Activated CD4-positive, alpha-beta memory T cell treated with anti-CD3 and anti-CD28 coated beads for 36 hours (primary cell): ENCODE measurements at regions of chr18 and their contacts with region 1.

Region 1: DNA sequence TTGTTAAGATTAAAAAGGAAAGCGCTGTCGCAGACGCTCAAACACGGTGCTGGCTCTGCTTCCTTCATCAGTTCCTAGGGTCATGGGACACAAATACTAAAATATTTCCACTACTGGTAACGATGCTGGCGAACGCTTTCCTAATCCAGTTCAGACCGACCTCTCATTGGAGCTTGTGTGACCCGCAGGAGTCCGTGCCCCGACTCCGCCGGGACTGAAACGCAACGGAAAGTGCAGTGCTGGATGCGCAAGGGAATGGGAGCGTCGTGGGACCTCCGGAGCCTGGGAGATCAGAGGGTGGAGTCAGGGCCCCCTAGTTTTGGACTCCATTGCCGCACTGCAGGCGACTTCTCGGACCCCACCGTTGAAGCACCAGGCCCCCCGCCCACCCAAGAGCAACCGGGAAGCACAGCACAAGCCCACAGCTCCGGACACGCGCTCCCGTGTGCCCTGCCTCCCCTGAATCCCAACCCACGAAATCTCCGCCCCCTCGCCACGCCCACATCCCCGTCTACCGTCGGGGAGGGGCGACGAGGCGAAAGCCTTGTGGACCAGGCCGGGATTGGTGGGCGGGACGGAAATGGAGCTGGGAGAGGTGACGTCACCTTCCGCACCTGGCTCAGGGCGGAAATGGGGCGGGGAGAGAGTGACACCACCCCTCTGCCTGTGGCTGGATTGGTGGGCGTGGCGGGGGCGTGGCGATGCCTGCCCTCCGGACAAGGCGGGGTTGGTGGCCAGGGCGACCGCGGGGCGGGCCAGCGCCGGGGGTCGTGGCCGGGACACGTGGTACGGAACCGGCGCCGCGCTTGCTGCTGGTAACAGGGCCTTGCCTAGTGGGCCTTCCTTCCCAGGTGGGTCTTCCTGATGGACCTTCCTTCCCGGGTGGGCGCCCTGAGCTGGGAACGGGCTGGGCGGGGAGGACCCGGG is at the start of gene CNDP2:
- DNase-seq: peak; percentile 100
- H3K4me3 Mint-ChIP-seq: peak within 1 kb of the TSS; percentile 95
- H3K27ac Mint-ChIP-seq: peak within 1 kb of the TSS; percentile 100
- H3K4me1 Mint-ChIP-seq: peaks cover 38% of the 10 kb centered on the region
- H3K27me3 Mint-ChIP-seq: no peaks in the 10 kb centered on the region
- total RNA-seq, gene CNDP2: 144 to 147 TPM

Region 2: GRCh38 chr18:74147779-74148542 is 347.9 kb before region 1 on chr18 and contains the starts of genes FBXO15 and TIMM21:
- CTCF ChIA-PET with region 1: interaction called, 3 read pairs
- POLR2A ChIA-PET with region 1: no interaction called
- intact Hi-C with region 1: loop called (anchors 1 kb)
- DNase-seq: peak; percentile 97
- H3K4me3 Mint-ChIP-seq: peak within 1 kb of the TSS; percentile 95
- H3K27ac Mint-ChIP-seq: peak within 1 kb of the TSS; percentile 99
- H3K4me1 Mint-ChIP-seq: peaks cover 40% of the 10 kb centered on the region
- H3K27me3 Mint-ChIP-seq: peaks cover 2% of the 10 kb centered on the region
- total RNA-seq, gene FBXO15: 0.67 to 0.75 TPM
- total RNA-seq, gene TIMM21: 37.1 to 38.3 TPM

Region 3: DNA sequence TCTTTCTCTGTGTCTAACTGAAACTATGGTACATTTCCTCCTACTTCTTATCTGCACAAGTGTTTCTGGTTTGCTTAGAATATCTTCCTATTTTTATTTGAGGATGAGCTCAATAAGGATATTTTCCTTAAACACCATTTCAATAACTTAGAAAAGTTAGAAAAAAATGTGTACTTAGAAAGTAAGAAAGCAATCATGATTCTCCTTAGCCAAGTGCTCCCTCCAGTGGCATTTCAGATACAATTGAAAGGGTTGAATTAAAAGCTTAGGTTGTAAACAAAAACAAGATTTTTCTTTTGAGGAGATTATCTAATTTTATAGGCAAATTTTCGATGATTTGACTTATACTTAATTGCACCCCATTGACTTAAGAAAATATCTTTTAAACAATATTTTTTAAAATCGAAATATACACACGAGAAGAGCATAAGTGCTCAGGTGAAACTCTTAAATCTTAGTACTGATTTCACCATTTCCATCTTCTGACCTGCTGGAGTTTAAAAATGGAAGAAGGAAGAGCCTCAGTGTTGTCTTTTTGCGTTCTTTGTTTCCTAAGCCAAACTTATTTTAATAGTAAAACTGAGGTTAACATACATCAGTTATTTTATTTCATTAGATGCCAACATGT is 153.3 kb before region 1 on chr18:
- CTCF ChIA-PET with region 1: interaction called, 11 read pairs
- POLR2A ChIA-PET with region 1: no interaction called
- intact Hi-C with region 1: no loop called
- DNase-seq: no peak
- H3K4me3 Mint-ChIP-seq: no peak overlapping the region
- H3K27ac Mint-ChIP-seq: no peak overlapping the region
- H3K4me1 Mint-ChIP-seq: no peaks in the 10 kb centered on the region
- H3K27me3 Mint-ChIP-seq: peaks cover 6% of the 10 kb centered on the region

Region 4: DNA sequence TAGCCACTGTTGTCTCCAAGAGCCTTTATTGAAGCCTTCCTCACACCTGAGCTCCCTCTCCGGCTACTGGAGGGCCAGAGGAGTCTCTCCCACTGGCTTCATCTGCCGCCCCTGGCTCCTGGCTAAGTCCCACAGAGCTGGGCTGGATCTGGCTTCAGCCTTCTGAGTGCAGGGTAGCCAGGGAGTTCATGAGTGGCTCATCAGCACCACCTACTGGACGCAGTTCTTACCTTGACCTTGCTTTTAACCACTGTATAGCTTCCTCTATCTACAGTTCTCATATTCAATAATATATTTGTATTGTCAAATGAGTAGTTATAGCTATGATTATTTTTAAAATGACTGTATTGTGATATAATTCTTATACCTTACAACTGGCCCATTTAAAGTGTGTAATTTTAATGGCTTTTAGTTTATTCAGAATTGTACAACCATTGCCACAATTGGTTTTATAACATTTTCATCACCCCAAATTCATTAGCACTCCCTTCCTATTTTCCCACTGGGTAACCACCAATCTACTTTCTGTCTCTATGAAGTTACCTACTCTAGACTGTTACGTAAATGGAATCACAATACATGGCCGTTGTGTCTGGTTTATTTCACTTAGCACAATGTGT is 56.2 kb after region 1 on chr18:
- CTCF ChIA-PET with region 1: interaction called, 7 read pairs
- POLR2A ChIA-PET with region 1: no interaction called
- intact Hi-C with region 1: loop called (anchors 5 kb)
- DNase-seq: peak; percentile 86
- H3K4me3 Mint-ChIP-seq: no peak overlapping the region
- H3K27ac Mint-ChIP-seq: peak overlapping the region; percentile 51
- H3K4me1 Mint-ChIP-seq: no peaks in the 10 kb centered on the region
- H3K27me3 Mint-ChIP-seq: peaks cover 13% of the 10 kb centered on the region

Region 5: GRCh38 chr18:75209129-75209950 is 713.5 kb after region 1 on chr18 and contains the start of gene PTGR3:
- CTCF ChIA-PET with region 1: no interaction called
- POLR2A ChIA-PET with region 1: interaction called, 4 read pairs
- intact Hi-C with region 1: loop called (anchors 2 kb)
- DNase-seq: peak; percentile 91
- H3K4me3 Mint-ChIP-seq: peak within 1 kb of the TSS; percentile 99
- H3K27ac Mint-ChIP-seq: peak within 1 kb of the TSS; percentile 98
- H3K4me1 Mint-ChIP-seq: peaks cover 56% of the 10 kb centered on the region
- H3K27me3 Mint-ChIP-seq: no peaks in the 10 kb centered on the region
- total RNA-seq, gene PTGR3: 29.6 to 30.2 TPM

Region 6: DNA sequence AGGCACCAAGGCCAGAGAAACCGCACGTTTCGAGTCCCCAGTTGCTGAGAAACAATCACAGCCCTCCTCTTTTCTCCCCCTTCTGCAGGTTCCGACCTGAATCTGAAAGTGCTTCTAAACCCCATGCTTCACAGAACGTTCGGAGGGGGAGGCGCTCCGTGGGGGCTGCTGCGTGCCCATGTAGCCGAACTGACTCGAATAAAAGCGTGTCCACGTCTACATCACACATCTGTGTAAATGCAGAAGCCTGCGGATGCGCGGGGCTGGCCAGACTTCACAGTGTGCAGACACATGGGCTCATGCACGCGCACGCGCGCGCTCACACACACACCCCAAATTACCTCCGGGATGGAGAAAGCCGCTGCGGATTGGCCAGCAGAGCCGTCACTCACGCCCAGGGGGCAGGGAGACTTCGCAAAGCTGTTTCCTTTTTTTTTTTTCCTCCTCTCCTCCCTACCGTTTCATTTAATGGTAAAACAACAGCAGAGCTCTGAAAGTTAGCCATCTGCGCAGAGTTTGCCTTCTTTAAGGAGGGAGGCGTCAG is 1996.9 kb after region 1 on chr18:
- CTCF ChIA-PET with region 1: no interaction called
- POLR2A ChIA-PET with region 1: no interaction called
- intact Hi-C with region 1: loop called (anchors 10 kb)
- DNase-seq: peak; percentile 99
- H3K4me3 Mint-ChIP-seq: peak overlapping the region; percentile 84
- H3K27ac Mint-ChIP-seq: peak overlapping the region; percentile 42
- H3K4me1 Mint-ChIP-seq: peaks cover 33% of the 10 kb centered on the region
- H3K27me3 Mint-ChIP-seq: peaks cover 60% of the 10 kb centered on the region